ENCODE measurements at regions of chr5 and their contacts with region 1.

Region 1: DNA sequence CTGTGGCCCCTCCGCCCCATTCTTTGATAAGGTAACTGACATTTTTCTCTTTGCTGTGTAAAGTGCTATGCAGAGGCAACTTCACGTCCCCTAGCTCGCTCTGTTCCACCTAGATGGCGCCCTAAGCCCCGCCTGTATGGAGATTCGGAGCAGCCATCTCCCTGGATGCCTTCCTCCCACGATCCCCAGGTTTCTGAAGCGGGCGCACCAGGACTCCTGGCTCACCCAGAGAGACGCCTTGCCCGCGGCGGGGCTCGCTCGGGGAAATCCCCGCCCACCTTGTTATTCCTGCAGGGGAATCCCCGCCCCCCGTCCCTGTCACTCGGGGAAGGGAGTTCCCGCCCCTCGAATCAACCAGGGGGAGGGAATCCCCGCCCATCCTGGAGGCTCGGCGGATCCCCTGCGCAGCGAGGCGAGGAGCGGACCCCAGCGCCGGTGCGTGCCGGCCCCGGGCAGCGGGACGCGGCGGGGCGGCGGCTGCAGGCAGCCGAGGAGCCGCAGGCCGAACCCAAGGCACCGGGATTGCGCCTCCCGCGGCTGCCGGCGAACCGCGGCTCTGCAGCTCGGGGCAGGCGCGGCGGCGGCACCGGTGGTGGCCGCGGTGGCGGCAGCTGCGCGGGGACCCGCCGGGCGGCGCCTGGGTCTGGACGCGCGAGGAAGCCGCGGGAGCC is at the start of gene PDZD2:
- DNase-seq: peak; percentile 88 to 92 (median 91)
- ATAC-seq: peak; percentile 72 to 86 (median 82)
- H3K4me3 ChIP-seq: peak within 1 kb of the TSS; percentile 66 to 93 (median 77)
- H3K27ac ChIP-seq: peak within 1 kb of the TSS; percentile 48 to 91 (median 80)
- H3K4me1 ChIP-seq: peaks cover 3 to 72% (median 30%) of the 10 kb centered on the region in 12 donors
- H3K27me3 ChIP-seq: peaks cover 0 to 7% (median 0%) of the 10 kb centered on the region in 9 donors
- CTCF ChIP-seq: peak; percentile 16 to 59 (median 32)
- POLR2A ChIP-seq: peak in 1 of 2 donors; percentile 64
- total RNA-seq, gene PDZD2: 41.3 to 116 (median 82.9) TPM

Region 2: DNA sequence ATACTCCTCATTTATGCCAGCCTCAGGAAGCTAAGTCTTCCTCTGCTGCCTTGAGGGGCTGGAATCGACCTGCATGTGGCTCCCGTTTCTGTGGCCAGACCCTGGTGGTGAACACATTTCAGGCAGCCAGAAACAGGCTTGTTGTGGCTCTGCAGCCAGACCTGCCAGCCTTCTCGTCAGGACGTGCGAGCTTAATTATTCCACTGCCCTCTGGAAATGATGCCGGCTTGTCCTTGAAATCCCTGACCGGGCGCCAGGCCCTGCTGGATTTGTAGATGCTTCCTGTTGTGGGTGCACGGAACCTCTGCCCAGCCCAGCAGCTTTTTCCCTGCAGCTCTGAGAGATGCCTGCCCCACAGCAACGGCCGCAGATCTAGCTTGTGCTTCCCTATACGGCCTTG is 41.6 kb after region 1 on chr5:
- intact Hi-C with region 1: loop called in 2 of 10 experiments (anchors 5 kb)
- DNase-seq: peak; percentile 72 to 88 (median 80)
- ATAC-seq: peak; percentile 66 to 87 (median 78)
- H3K4me3 ChIP-seq: no peak overlapping the region
- H3K27ac ChIP-seq: peak overlapping the region in 10 of 12 donors; percentile 24 to 75 (median 57)
- H3K4me1 ChIP-seq: peaks cover 0 to 45% (median 7%) of the 10 kb centered on the region in 12 donors
- H3K27me3 ChIP-seq: no peaks in the 10 kb centered on the region
- CTCF ChIP-seq: peak in 3 of 12 donors; percentile 2 to 16 (median 13)
- POLR2A ChIP-seq: no peak

Region 3: GRCh38 chr5:31720007-31720406 is 81.1 kb after region 1 on chr5:
- intact Hi-C with region 1: loop called in 1 of 10 experiments (anchors 10 kb)
- DNase-seq: no peak
- ATAC-seq: peak in 2 of 4 donors; percentile 19 to 31
- H3K4me3 ChIP-seq: no peak overlapping the region
- H3K27ac ChIP-seq: no peak overlapping the region
- H3K4me1 ChIP-seq: peaks cover 0 to 14% (median 6%) of the 10 kb centered on the region in 12 donors
- H3K27me3 ChIP-seq: no peaks in the 10 kb centered on the region
- CTCF ChIP-seq: no peak
- POLR2A ChIP-seq: no peak

Region 4: GRCh38 chr5:31800351-31800750 is 161.5 kb after region 1 on chr5:
- intact Hi-C with region 1: loop called in 6 of 10 experiments (anchors 2 to 10 kb)
- DNase-seq: no peak
- ATAC-seq: no peak
- H3K4me3 ChIP-seq: no peak overlapping the region
- H3K27ac ChIP-seq: no peak overlapping the region
- H3K4me1 ChIP-seq: peaks cover 0 to 6% (median 2%) of the 10 kb centered on the region in 12 donors
- H3K27me3 ChIP-seq: no peaks in the 10 kb centered on the region
- CTCF ChIP-seq: no peak
- POLR2A ChIP-seq: no peak